ENCODE measurements at regions of chr10 and their contacts with region 1.

Region 1: GRCh38 chr10:116120688-116121455 is 152.1 kb downstream of the GFRA1 start:
- DNase-seq: no peak
- ATAC-seq: no peak
- H3K4me3 ChIP-seq: no peak overlapping the region
- H3K27ac ChIP-seq: no peak overlapping the region
- H3K4me1 ChIP-seq: no peaks in the 10 kb centered on the region
- H3K27me3 ChIP-seq: no peaks in the 10 kb centered on the region; a peak in 1 of 5 replicates
- CTCF ChIP-seq: peak; percentile 39
- EP300 ChIP-seq: no peak
- POLR2A ChIP-seq: no peak
- RAD21 ChIP-seq: no peak

Region 2: GRCh38 chr10:115795964-115796363 is 324.9 kb before region 1 on chr10:
- CTCF ChIA-PET with region 1: no interaction called
- POLR2A ChIA-PET with region 1: no interaction called
- in situ Hi-C with region 1: no loop called
- intact Hi-C with region 1: loop called (anchors 5 kb)
- DNase-seq: no peak
- ATAC-seq: no peak
- H3K4me3 ChIP-seq: no peak overlapping the region
- H3K27ac ChIP-seq: no peak overlapping the region
- H3K4me1 ChIP-seq: no peaks in the 10 kb centered on the region
- H3K27me3 ChIP-seq: no peaks in the 10 kb centered on the region; a peak in 1 of 5 replicates
- CTCF ChIP-seq: no peak
- EP300 ChIP-seq: no peak
- POLR2A ChIP-seq: no peak
- RAD21 ChIP-seq: no peak

Region 3: GRCh38 chr10:116085323-116085722 is 35.5 kb before region 1 on chr10:
- CTCF ChIA-PET with region 1: no interaction called
- POLR2A ChIA-PET with region 1: no interaction called
- in situ Hi-C with region 1: no loop called
- intact Hi-C with region 1: no loop called
- DNase-seq: no peak
- ATAC-seq: no peak
- H3K4me3 ChIP-seq: no peak overlapping the region
- H3K27ac ChIP-seq: no peak overlapping the region
- H3K4me1 ChIP-seq: no peaks in the 10 kb centered on the region
- H3K27me3 ChIP-seq: peaks cover 0 to 2% of the 10 kb centered on the region in 2 experiments; a peak in 1 of 5 replicates
- CTCF ChIP-seq: no peak
- EP300 ChIP-seq: no peak
- POLR2A ChIP-seq: no peak
- RAD21 ChIP-seq: no peak

Region 4: DNA sequence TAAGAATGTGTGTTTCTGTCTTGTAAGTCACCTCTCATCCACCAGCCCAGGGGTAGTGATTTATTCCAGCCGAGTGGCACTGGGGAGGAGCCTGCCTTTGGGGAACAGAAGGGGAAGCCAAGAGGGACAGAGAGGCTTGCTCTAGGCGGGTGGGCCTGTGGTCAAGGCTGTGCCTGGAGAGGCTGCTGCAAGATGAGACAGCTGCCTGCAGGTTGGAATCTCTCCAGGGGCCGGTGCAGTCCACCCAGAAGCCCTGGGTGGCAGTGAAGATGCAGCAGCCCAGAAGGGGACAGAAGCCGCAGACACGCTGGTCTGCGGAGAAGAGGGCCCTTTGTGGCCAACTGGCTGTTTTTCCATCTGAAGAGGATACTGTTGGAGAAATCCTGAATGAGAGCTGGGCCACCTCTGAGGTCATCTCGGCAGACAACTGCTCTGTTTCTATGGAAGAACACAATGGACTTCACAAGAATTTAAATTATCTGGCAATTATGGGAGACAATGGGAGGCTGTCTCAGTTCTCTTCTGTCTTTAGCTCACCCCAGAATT is 23.6 kb before region 1 on chr10:
- CTCF ChIA-PET with region 1: no interaction called
- POLR2A ChIA-PET with region 1: no interaction called
- in situ Hi-C with region 1: no loop called
- intact Hi-C with region 1: no loop called
- DNase-seq: no peak
- ATAC-seq: no peak
- H3K4me3 ChIP-seq: no peak overlapping the region
- H3K27ac ChIP-seq: no peak overlapping the region
- H3K4me1 ChIP-seq: no peaks in the 10 kb centered on the region
- H3K27me3 ChIP-seq: no peaks in the 10 kb centered on the region; a peak in 1 of 5 replicates
- CTCF ChIP-seq: no peak
- EP300 ChIP-seq: no peak
- POLR2A ChIP-seq: no peak
- RAD21 ChIP-seq: no peak

Region 5: DNA sequence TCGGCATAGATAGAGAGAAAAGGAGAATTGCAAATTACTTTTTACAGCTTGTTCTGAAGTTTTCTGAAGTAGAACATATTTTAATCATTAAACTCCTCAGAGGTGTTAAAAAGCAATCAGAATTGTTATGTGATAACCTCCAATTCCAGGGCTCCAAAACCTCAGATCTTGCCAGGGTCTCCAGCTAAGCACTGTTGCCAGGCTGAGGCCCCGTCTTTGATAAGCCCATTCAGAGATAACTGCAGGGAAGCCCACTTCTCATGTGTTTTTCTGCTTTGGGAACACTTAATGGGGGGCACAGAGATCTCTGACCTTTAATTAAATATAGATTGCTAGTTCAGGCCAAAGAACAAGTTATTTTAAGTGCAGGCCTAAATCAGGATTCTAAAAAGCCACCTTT is 111.7 kb after region 1 on chr10:
- CTCF ChIA-PET with region 1: no interaction called
- POLR2A ChIA-PET with region 1: no interaction called
- in situ Hi-C with region 1: no loop called
- intact Hi-C with region 1: no loop called
- DNase-seq: no peak
- ATAC-seq: no peak
- H3K4me3 ChIP-seq: no peak overlapping the region
- H3K27ac ChIP-seq: no peak overlapping the region
- H3K4me1 ChIP-seq: no peaks in the 10 kb centered on the region
- H3K27me3 ChIP-seq: no peaks in the 10 kb centered on the region
- CTCF ChIP-seq: no peak
- EP300 ChIP-seq: no peak
- POLR2A ChIP-seq: no peak
- RAD21 ChIP-seq: no peak